CD4-positive, alpha-beta memory T cell (primary cell): ENCODE measurements at regions of chr10 and their contacts with region 1.

Region 1: DNA sequence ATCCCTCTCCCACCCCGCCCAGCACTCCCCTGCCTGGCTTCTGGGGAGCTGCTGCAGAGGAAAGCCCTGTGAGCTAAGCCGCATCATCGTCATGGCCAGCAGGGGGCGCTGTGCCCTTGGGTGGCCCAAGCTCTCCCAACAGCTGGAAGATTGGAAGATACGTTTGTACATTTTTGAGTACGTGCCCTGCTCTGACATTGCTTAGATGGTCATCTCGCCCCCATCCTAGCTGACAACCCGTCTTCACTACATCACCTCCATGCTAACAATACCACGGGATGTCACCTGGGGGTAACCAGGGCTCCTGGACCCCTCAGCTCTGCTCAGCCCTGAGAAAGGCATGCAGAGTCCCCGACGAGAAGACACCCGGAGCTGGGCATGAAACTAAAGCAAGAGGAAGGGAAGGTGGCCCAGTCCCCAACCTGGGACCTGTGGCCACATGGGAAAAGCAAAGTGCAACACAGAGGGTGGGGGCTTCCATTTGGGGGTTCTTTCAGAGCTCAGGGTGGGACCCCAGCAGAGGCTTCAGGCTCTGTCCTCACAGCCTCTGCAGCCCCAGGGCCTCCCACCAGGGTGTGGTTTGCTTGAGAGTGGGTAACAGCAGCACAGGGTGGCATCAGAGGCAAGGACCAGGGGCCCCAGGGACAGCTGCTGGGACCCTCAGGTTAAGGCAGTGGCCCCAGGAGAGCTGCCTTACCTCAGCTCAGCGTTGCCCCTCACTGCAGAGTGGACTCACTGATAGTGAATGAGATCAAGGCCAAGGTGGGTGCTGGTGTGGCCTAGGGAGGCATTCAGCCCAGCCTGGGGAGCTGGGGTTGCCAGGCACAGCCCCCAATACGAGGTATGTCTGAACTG is 136.7 kb downstream of the PTPN20 start:
- DNase-seq: peak; percentile 57 to 62 (median 60)
- H3K4me3 ChIP-seq: no peak overlapping the region
- H3K4me3 Mint-ChIP-seq: peak overlapping the region in 5 of 8 donors; percentile 9 to 55 (median 48)
- H3K27ac ChIP-seq: no peak overlapping the region
- H3K27ac Mint-ChIP-seq: peak overlapping the region in 4 of 7 donors; percentile 29 to 85 (median 63)
- H3K4me1 ChIP-seq: peaks cover 18% of the 10 kb centered on the region
- H3K4me1 Mint-ChIP-seq: peaks cover 15 to 25% (median 18%) of the 10 kb centered on the region in 4 donors
- H3K27me3 ChIP-seq: no peaks in the 10 kb centered on the region
- H3K27me3 Mint-ChIP-seq: no peaks in the 10 kb centered on the region

Region 2: GRCh38 chr10:47024399-47025252 is 23.3 kb before region 1 on chr10:
- CTCF ChIA-PET with region 1: interaction called, 46 read pairs
- POLR2A ChIA-PET with region 1: no interaction called
- intact Hi-C with region 1: loop called (anchors 1 kb)
- DNase-seq: peak in 4 of 5 donors; percentile 51 to 62 (median 55)
- H3K4me3 ChIP-seq: no peak overlapping the region
- H3K4me3 Mint-ChIP-seq: no peak overlapping the region
- H3K27ac ChIP-seq: no peak overlapping the region
- H3K27ac Mint-ChIP-seq: peak overlapping the region in 2 of 7 donors; percentile 21 to 74
- H3K4me1 ChIP-seq: peaks cover 6% of the 10 kb centered on the region
- H3K4me1 Mint-ChIP-seq: peaks cover 0 to 4% (median 2%) of the 10 kb centered on the region in 4 donors
- H3K27me3 ChIP-seq: no peaks in the 10 kb centered on the region
- H3K27me3 Mint-ChIP-seq: peaks cover 0 to 1% of the 10 kb centered on the region in 2 donors

Region 3: DNA sequence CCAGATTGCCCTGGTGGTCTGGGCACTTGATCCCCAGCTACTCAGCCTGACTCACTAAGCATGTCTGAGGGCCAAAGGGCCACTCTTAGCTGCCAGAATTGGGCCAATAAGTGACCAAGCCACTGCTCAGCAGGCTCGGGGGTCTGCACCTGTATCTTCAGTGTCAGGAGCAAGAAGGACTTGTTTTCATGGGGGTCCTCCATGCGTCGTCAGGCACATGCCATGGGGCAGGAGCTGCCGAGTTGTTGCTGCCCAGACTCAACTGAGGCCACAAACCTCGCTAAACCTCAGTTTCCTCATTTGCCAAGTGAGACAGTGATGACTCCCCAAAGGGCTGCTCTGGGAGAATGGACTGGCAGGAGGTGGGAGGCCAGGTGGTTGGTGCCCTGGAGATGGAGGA is 93.5 kb after region 1 on chr10:
- CTCF ChIA-PET with region 1: no interaction called
- POLR2A ChIA-PET with region 1: no interaction called
- intact Hi-C with region 1: no loop called
- DNase-seq: no peak
- H3K4me3 ChIP-seq: no peak overlapping the region
- H3K4me3 Mint-ChIP-seq: no peak overlapping the region
- H3K27ac ChIP-seq: no peak overlapping the region
- H3K27ac Mint-ChIP-seq: no peak overlapping the region
- H3K4me1 ChIP-seq: no peaks in the 10 kb centered on the region
- H3K4me1 Mint-ChIP-seq: no peaks in the 10 kb centered on the region
- H3K27me3 ChIP-seq: no peaks in the 10 kb centered on the region
- H3K27me3 Mint-ChIP-seq: no peaks in the 10 kb centered on the region

Region 4: GRCh38 chr10:47152861-47153349 is 105.0 kb after region 1 on chr10:
- CTCF ChIA-PET with region 1: no interaction called
- POLR2A ChIA-PET with region 1: no interaction called
- intact Hi-C with region 1: no loop called
- DNase-seq: no peak
- H3K4me3 ChIP-seq: no peak overlapping the region
- H3K4me3 Mint-ChIP-seq: no peak overlapping the region
- H3K27ac ChIP-seq: no peak overlapping the region
- H3K27ac Mint-ChIP-seq: no peak overlapping the region
- H3K4me1 ChIP-seq: no peaks in the 10 kb centered on the region
- H3K4me1 Mint-ChIP-seq: peaks cover 0 to 4% (median 0%) of the 10 kb centered on the region in 4 donors
- H3K27me3 ChIP-seq: no peaks in the 10 kb centered on the region
- H3K27me3 Mint-ChIP-seq: peaks cover 0 to 3% of the 10 kb centered on the region in 2 donors

Region 5: DNA sequence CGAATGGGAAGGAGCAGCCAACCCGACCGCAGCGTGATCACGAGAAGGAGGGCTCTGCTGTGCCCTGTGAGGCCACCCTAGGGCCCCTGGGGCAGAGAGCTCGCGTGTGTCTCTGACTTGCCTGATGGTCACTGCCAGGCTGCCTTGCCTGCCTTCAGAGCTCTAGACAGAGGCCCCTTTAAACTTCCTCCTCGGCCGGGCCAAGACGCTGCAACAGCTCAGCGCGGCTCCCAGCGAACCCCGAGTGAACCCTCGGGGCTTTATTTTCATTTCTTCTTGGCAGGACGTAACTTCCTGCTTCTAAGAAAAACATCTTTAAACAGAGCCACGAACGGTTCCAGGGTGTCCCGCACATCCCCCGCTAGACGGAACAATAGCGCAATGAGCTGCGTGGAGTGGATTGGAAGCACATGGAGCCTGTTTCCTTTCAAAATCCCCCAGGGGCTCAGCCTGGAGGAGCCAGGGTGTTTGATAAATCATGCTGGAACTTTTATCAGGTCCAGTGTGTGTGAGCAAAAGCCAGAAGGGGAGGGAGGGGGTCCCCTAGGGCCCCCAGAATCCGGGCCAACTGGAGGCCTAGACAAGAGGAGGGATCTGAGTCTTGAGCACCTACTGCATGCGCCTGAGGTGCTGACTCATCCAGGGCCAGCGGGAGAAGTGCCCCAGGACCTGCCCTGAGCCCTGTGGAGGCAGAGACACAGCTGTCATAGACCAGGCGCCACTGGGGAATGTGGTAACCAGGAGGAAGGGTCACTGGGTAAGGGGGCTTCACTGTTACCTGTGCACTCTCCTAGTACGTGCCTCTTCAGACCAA is 118.0 kb after region 1 on chr10:
- CTCF ChIA-PET with region 1: interaction called, 22 read pairs
- POLR2A ChIA-PET with region 1: interaction called, 8 read pairs
- intact Hi-C with region 1: loop called (anchors 1 kb)
- DNase-seq: peak; percentile 44 to 61 (median 51)
- H3K4me3 ChIP-seq: peak overlapping the region; percentile 32 to 64
- H3K4me3 Mint-ChIP-seq: peak overlapping the region; percentile 86 to 94 (median 88)
- H3K27ac ChIP-seq: peak overlapping the region; percentile 40
- H3K27ac Mint-ChIP-seq: peak overlapping the region; percentile 84 to 96 (median 95)
- H3K4me1 ChIP-seq: peaks cover 22% of the 10 kb centered on the region
- H3K4me1 Mint-ChIP-seq: peaks cover 12 to 23% (median 18%) of the 10 kb centered on the region in 4 donors
- H3K27me3 ChIP-seq: no peaks in the 10 kb centered on the region
- H3K27me3 Mint-ChIP-seq: no peaks in the 10 kb centered on the region

Region 6: DNA sequence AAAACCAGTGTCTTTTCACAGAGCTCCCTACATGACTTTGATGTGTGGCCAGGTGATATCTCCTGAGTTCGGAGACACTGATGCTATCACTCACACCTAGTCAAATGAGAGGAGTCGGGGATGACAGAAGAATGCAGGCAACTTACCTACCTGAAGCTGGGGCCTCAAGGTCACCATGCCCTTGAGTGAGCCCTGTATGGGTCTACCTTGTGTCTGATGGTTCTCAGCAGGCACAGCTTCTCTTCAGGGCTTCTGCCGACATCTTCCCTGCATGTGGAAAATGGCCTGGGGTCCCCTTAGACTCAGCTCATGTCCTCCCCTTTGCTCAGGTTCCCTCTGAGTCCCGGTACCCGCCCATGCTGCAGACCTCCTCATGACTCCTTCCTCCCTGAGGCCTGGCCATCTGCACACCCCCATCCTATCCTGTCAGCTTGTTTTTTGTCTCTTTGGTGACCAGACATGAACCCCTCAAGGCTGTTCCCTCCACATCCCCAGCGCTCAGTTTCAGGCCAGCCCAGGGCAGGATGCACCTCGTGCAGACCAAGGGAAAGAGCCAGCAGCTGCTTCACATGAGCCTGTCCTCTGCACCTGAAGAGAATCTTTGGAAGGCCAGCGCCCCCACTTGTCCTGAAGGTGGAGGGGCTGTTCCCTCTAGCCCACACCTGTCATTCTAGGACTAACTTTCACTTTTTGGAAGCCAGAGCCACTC is 177.5 kb after region 1 on chr10:
- CTCF ChIA-PET with region 1: interaction called, 26 read pairs
- POLR2A ChIA-PET with region 1: no interaction called
- intact Hi-C with region 1: no loop called
- DNase-seq: no peak
- H3K4me3 ChIP-seq: no peak overlapping the region
- H3K4me3 Mint-ChIP-seq: no peak overlapping the region
- H3K27ac ChIP-seq: no peak overlapping the region
- H3K27ac Mint-ChIP-seq: peak overlapping the region in 2 of 7 donors; percentile 12 to 80
- H3K4me1 ChIP-seq: peaks cover 4% of the 10 kb centered on the region
- H3K4me1 Mint-ChIP-seq: peaks cover 0 to 10% (median 4%) of the 10 kb centered on the region in 4 donors
- H3K27me3 ChIP-seq: no peaks in the 10 kb centered on the region
- H3K27me3 Mint-ChIP-seq: no peaks in the 10 kb centered on the region

Region 7: GRCh38 chr10:47269294-47269693 is 221.4 kb after region 1 on chr10:
- CTCF ChIA-PET with region 1: interaction called, 4 read pairs
- POLR2A ChIA-PET with region 1: no interaction called
- intact Hi-C with region 1: loop called (anchors 1 kb)
- DNase-seq: no peak
- H3K4me3 ChIP-seq: no peak overlapping the region
- H3K4me3 Mint-ChIP-seq: no peak overlapping the region
- H3K27ac ChIP-seq: no peak overlapping the region
- H3K27ac Mint-ChIP-seq: peak overlapping the region in 1 of 7 donors; percentile 7
- H3K4me1 ChIP-seq: peaks cover 14% of the 10 kb centered on the region
- H3K4me1 Mint-ChIP-seq: peaks cover 5 to 34% (median 24%) of the 10 kb centered on the region in 4 donors
- H3K27me3 ChIP-seq: no peaks in the 10 kb centered on the region
- H3K27me3 Mint-ChIP-seq: no peaks in the 10 kb centered on the region

Region 8: DNA sequence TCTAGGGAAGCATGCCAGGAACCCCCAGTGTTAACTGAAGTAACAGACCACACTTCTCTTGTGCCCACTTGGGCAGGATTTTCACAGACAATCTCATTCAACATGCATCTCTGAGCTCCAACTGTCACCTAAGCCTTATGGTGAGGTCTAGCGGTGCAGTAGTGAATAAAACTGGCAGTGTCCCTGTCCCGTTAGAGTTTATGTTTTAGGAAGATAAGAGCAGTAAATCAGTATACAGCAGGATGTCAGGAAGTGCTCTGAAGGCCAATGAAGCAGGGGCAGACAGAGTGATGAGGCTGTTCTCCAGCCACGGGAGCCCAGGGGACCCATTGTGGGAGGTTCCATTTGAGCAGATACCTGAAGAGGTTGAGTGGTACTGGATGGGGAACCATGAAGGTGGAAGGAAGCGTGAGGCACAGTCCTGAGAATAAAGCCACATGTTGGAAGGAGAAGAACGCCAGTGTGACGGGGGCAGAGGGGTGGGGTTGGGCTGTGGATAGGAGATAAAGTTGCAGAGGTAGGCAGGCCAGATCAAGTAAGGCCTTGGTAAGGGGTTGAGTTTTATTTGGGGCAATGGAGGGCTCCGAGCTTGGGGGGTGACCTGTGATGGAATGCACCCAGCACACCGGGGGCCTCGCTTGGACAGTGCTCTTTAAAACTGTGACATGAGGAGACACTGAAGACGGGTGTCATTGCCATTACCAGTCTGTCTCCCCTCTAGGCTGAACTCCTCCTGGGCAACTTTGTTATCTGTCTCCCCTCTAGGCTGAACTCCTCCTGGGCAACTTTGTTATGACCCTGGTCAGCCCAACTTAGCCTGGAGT is 258.7 kb after region 1 on chr10:
- CTCF ChIA-PET with region 1: interaction called, 244 read pairs
- POLR2A ChIA-PET with region 1: interaction called, 39 read pairs
- intact Hi-C with region 1: no loop called
- DNase-seq: no peak
- H3K4me3 ChIP-seq: no peak overlapping the region
- H3K4me3 Mint-ChIP-seq: no peak overlapping the region
- H3K27ac ChIP-seq: no peak overlapping the region
- H3K27ac Mint-ChIP-seq: peak overlapping the region in 2 of 7 donors; percentile 16 to 53
- H3K4me1 ChIP-seq: peaks cover 22% of the 10 kb centered on the region
- H3K4me1 Mint-ChIP-seq: peaks cover 18 to 55% (median 36%) of the 10 kb centered on the region in 4 donors
- H3K27me3 ChIP-seq: no peaks in the 10 kb centered on the region
- H3K27me3 Mint-ChIP-seq: peaks cover 0 to 7% of the 10 kb centered on the region in 2 donors

Region 9: DNA sequence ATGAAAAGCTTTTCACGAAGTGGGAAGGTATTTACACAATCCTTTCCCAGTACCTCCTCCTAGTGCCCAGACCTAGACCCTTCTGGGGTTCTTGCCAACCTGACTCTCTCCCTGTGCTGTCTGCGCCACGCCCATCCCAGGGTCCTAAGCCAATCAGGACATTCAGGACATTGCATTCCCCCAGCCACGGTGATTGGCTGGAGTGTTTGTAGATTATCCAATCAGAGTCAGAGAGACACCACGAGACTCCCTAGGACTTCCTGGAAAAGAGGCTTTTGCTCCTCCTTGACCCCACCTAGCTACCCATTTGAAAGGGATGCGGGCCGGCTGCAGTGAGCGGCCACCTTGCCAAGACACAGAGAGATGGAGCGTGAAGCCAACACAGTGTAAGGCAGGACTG is 270.8 kb after region 1 on chr10:
- CTCF ChIA-PET with region 1: interaction called, 244 read pairs
- POLR2A ChIA-PET with region 1: no interaction called
- intact Hi-C with region 1: no loop called
- DNase-seq: no peak
- H3K4me3 ChIP-seq: no peak overlapping the region
- H3K4me3 Mint-ChIP-seq: no peak overlapping the region
- H3K27ac ChIP-seq: no peak overlapping the region
- H3K27ac Mint-ChIP-seq: no peak overlapping the region
- H3K4me1 ChIP-seq: no peaks in the 10 kb centered on the region
- H3K4me1 Mint-ChIP-seq: no peaks in the 10 kb centered on the region
- H3K27me3 ChIP-seq: no peaks in the 10 kb centered on the region
- H3K27me3 Mint-ChIP-seq: peaks cover 3 to 7% of the 10 kb centered on the region in 2 donors